A549 (cell line): ENCODE measurements at regions of chr4 and their contacts with region 1.

Region 1: DNA sequence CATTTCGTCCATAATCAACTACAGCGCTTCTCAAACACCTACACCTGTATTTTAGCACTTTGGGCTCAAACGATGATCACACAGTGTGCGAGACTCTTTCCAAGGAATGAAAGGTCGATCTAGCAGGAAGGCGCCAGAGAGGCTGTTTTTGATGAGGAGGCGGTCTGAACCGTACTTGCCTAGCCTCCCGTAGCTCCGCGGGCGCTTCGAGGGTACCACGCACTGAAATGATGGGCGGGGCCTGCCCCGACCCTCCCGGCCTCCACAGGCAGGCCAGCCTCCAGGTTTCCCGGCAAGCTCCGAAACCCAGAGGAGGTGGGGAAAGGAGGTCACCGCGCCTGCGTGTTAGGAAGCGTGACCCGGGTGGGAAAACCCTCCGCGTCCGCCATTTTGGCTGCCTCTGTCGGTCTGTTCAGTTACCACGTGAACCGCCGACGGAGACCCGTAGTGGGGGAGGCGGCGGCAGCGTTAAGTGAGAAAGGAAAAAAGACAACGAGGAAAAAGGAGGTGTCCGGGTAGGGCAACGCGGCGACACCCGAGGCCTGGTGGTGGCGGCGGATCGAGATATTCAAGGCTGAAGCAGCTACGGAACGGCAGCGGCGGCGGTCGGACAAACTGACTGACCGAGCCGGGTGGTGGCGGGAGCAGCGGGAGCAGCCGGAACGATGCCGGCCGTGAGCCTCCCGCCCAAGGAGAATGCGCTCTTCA is at the start of gene NAA15:
- DNase-seq: peak; percentile 84 to 97
- ATAC-seq: peak; percentile 92 to 96
- H3K4me3 ChIP-seq: peak within 1 kb of the TSS; percentile 66
- H3K27ac ChIP-seq: peak within 1 kb of the TSS; percentile 85 to 95
- H3K4me1 ChIP-seq: peaks cover 18% of the 10 kb centered on the region; the same call in 2 of the 3 replicates
- CTCF ChIP-seq: no peak
- EP300 ChIP-seq: no peak
- POLR2A ChIP-seq: peak; percentile 52
- RAD21 ChIP-seq: no peak
- polyA plus RNA-seq, gene NAA15: 33.8 and 45.2 TPM in 2 replicates

Region 2: GRCh38 chr4:139177868-139178611 is 123.2 kb before region 1 on chr4:
- CTCF ChIA-PET with region 1: interaction called, 8 read pairs
- POLR2A ChIA-PET with region 1: interaction called, 27 read pairs
- DNase-seq: peak; percentile 58 to 90
- ATAC-seq: peak; percentile 70 to 84
- H3K4me3 ChIP-seq: peak overlapping the region; percentile 92
- H3K27ac ChIP-seq: peak overlapping the region; percentile 85 to 100
- H3K4me1 ChIP-seq: peaks cover 13% of the 10 kb centered on the region; the same call in 2 of the 3 replicates
- CTCF ChIP-seq: no peak
- EP300 ChIP-seq: no peak
- POLR2A ChIP-seq: peak; percentile 92
- RAD21 ChIP-seq: no peak

Region 3: GRCh38 chr4:139973015-139973414 is 671.7 kb after region 1 on chr4:
- CTCF ChIA-PET with region 1: no interaction called
- POLR2A ChIA-PET with region 1: no interaction called
- DNase-seq: no peak
- ATAC-seq: no peak
- H3K4me3 ChIP-seq: no peak overlapping the region
- H3K27ac ChIP-seq: peak overlapping the region in 1 of 2 experiments; percentile 35; a peak in 3 of 6 replicates
- H3K4me1 ChIP-seq: peaks cover 41% of the 10 kb centered on the region
- CTCF ChIP-seq: no peak
- EP300 ChIP-seq: no peak
- POLR2A ChIP-seq: no peak
- RAD21 ChIP-seq: no peak